ENCODE measurements at regions of chr11 and their contacts with region 1.

Region 1: GRCh38 chr11:66579017-66579606 is 10.7 kb upstream of the CTSF start:
- DNase-seq: no peak
- H3K4me3 ChIP-seq: no peak overlapping the region
- CTCF ChIP-seq: peak; percentile 89

Region 2: GRCh38 chr11:66559142-66559865 is 19.8 kb before region 1 on chr11:
- CTCF ChIA-PET with region 1: interaction called, 11 read pairs
- POLR2A ChIA-PET with region 1: no interaction called
- DNase-seq: no peak
- H3K4me3 ChIP-seq: no peak overlapping the region; the same call in 1 of the 2 replicates
- CTCF ChIP-seq: no peak

Region 3: GRCh38 chr11:66568124-66568916 is 10.8 kb before region 1 on chr11 and contains the start of gene CTSF:
- CTCF ChIA-PET with region 1: interaction called, 46 read pairs
- POLR2A ChIA-PET with region 1: no interaction called
- DNase-seq: no peak
- H3K4me3 ChIP-seq: peak within 1 kb of the TSS; percentile 57
- CTCF ChIP-seq: no peak

Region 4: DNA sequence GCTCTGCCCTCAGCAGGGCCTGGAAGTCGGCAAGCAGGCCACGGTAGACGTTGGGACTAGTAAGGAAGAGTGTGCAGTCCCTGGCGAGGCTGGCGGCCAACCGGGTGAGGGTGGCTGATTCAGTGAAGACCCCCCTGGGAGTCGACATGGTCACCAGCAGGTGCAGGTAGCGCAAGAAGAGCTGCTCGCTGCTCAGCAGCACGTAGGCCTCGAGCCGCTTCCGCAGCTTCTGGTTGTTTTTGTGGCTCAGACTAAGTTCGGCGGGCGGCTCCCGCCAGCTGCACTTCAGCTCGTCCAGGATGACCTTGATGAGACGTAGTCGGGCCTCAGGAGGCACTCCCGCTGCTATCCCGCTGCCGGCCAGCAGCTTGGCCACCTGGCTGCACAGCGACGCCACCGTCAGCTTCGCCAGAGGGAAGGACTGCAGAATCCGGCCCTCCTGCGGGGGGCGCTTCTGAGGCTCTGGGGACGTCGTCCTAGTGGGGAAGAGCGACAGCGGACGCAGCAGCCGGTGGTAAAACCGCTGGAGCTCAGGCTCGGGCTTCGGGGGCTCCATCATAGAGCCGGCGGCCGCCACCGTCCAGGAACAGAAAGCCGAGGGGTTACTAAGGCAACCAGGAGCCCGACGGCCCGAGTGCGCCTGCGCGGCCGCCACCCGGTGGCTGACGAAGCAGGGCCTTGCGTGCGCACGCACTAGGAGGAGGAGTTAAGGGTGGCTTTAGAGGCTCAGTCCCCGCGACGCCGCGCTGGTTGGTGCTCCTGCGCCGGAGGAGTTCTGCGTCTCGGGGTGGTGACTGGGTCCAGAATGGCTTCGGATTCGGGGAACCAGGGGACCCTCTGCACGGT is 13.6 kb after region 1 on chr11 and contains the starts of genes CCDC87 and CCS:
- CTCF ChIA-PET with region 1: interaction called, 36 read pairs
- POLR2A ChIA-PET with region 1: no interaction called
- DNase-seq: no peak
- H3K4me3 ChIP-seq: peak within 1 kb of the TSS; percentile 76
- CTCF ChIP-seq: peak; percentile 87

Measured in AG04449 (cell line).